CD4-positive, alpha-beta memory T cell (primary cell): ENCODE measurements at regions of chrX and their contacts with region 1.

Region 1: DNA sequence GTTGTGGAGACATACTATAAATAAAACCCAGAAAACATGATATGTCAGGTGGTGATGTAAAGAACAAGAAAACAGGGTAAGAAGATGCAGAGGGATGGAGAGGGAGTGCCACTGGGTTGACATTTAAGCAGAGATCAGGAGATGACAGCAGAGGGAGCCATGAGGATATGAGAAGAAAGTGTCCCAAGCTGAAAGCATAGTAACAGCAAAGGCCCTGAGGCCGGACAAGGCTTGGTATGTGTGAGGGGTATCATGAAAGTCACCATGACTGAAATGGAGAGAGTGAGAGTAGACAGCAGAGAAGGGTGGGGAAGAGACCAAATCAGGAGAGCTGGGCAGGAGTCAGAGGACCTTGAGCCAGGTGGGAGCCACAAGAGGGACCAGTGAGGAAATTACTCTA is 3.4 kb downstream of the GPKOW start:
- DNase-seq: no peak
- H3K4me3 ChIP-seq: no peak overlapping the region
- H3K4me3 Mint-ChIP-seq: peak overlapping the region in 2 of 8 donors; percentile 25 to 73
- H3K27ac ChIP-seq: no peak overlapping the region
- H3K27ac Mint-ChIP-seq: no peak overlapping the region
- H3K4me1 ChIP-seq: peaks cover 34% of the 10 kb centered on the region
- H3K4me1 Mint-ChIP-seq: peaks cover 23 to 50% (median 33%) of the 10 kb centered on the region in 4 donors
- H3K27me3 ChIP-seq: no peaks in the 10 kb centered on the region
- H3K27me3 Mint-ChIP-seq: no peaks in the 10 kb centered on the region

Region 2: DNA sequence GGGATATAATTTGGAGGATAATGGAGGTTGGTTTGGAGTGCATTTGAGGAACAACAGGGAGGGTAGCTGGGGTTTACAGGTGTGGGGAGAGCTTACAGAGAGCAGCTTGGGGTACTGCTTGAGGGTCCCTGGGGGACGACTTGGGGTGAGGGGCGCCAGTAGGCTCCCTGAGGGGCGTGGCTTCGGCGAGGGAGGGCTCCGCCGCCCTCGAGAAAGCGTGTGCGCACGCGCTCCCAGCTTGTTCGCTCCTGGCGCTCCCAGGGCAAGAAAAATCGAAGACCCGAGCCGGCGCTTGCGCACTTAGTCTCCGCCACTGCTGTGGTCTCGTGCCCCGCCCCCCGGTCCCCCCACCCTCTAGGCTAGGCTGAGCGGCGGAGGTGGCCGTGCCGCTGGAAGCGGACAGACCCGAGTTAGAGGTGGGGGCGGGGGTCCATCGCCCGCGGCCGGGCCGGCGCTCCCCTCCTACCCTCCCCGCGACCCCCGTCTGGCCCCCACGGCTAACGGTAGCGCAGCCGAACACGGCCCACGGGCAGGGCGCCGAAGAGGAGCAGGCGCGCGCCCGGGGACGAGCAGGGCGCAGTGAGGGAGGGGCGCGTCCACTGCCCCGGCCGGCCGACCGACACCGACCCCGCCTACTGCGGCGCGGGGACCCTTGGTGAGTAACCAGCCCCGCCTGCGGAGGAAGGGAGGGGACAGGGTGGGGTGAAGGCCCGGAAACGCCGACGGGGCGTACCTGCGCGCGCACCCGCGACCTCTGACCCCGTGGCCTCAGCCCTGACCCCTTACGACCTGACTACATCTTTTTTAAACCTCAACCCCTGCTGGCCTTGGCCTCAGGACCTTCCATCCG is 66.7 kb before region 1 on chrX:
- CTCF ChIA-PET with region 1: no interaction called
- POLR2A ChIA-PET with region 1: no interaction called
- intact Hi-C with region 1: loop called (anchors 2 kb)
- DNase-seq: peak; percentile 44 to 65 (median 49)
- H3K4me3 ChIP-seq: peak overlapping the region in 1 of 2 donors; percentile 43
- H3K4me3 Mint-ChIP-seq: peak overlapping the region; percentile 79 to 89 (median 86)
- H3K27ac ChIP-seq: peak overlapping the region; percentile 78
- H3K27ac Mint-ChIP-seq: peak overlapping the region; percentile 82 to 98 (median 94)
- H3K4me1 ChIP-seq: peaks cover 21% of the 10 kb centered on the region
- H3K4me1 Mint-ChIP-seq: peaks cover 18 to 32% (median 24%) of the 10 kb centered on the region in 4 donors
- H3K27me3 ChIP-seq: no peaks in the 10 kb centered on the region
- H3K27me3 Mint-ChIP-seq: no peaks in the 10 kb centered on the region

Region 3: GRCh38 chrX:49073601-49074571 is 46.2 kb before region 1 on chrX and contains the start of gene PRAF2:
- CTCF ChIA-PET with region 1: no interaction called
- POLR2A ChIA-PET with region 1: no interaction called
- intact Hi-C with region 1: loop called (anchors 1 kb)
- DNase-seq: peak; percentile 85 to 93 (median 89)
- H3K4me3 ChIP-seq: peak within 1 kb of the TSS; percentile 36 to 60
- H3K4me3 Mint-ChIP-seq: peak within 1 kb of the TSS; percentile 75 to 86 (median 84)
- H3K27ac ChIP-seq: peak within 1 kb of the TSS; percentile 77
- H3K27ac Mint-ChIP-seq: peak within 1 kb of the TSS; percentile 83 to 93 (median 88)
- H3K4me1 ChIP-seq: peaks cover 20% of the 10 kb centered on the region
- H3K4me1 Mint-ChIP-seq: peaks cover 5 to 28% (median 17%) of the 10 kb centered on the region in 4 donors
- H3K27me3 ChIP-seq: no peaks in the 10 kb centered on the region
- H3K27me3 Mint-ChIP-seq: no peaks in the 10 kb centered on the region
- total RNA-seq, gene PRAF2: 25.4 to 28.9 TPM

Region 4: GRCh38 chrX:49100704-49101628 is 19.1 kb before region 1 on chrX:
- CTCF ChIA-PET with region 1: no interaction called
- POLR2A ChIA-PET with region 1: no interaction called
- intact Hi-C with region 1: loop called (anchors 2 kb)
- DNase-seq: peak; percentile 88 to 91 (median 89)
- H3K4me3 ChIP-seq: peak overlapping the region; percentile 22 to 71
- H3K4me3 Mint-ChIP-seq: peak overlapping the region; percentile 87 to 92 (median 90)
- H3K27ac ChIP-seq: peak overlapping the region; percentile 76
- H3K27ac Mint-ChIP-seq: peak overlapping the region; percentile 93 to 97 (median 94)
- H3K4me1 ChIP-seq: peaks cover 6% of the 10 kb centered on the region
- H3K4me1 Mint-ChIP-seq: peaks cover 0 to 9% (median 4%) of the 10 kb centered on the region in 4 donors
- H3K27me3 ChIP-seq: no peaks in the 10 kb centered on the region
- H3K27me3 Mint-ChIP-seq: no peaks in the 10 kb centered on the region

Region 5: GRCh38 chrX:49155900-49156837 is 36.1 kb after region 1 on chrX:
- CTCF ChIA-PET with region 1: interaction called, 3 read pairs
- POLR2A ChIA-PET with region 1: interaction called, 6 read pairs
- intact Hi-C with region 1: loop called (anchors 1 kb)
- DNase-seq: peak; percentile 85 to 86 (median 85)
- H3K4me3 ChIP-seq: peak overlapping the region; percentile 29 to 56
- H3K4me3 Mint-ChIP-seq: peak overlapping the region; percentile 91 to 97 (median 93)
- H3K27ac ChIP-seq: peak overlapping the region; percentile 86
- H3K27ac Mint-ChIP-seq: peak overlapping the region; percentile 95 to 99 (median 97)
- H3K4me1 ChIP-seq: peaks cover 8% of the 10 kb centered on the region
- H3K4me1 Mint-ChIP-seq: peaks cover 9 to 23% (median 12%) of the 10 kb centered on the region in 4 donors
- H3K27me3 ChIP-seq: no peaks in the 10 kb centered on the region
- H3K27me3 Mint-ChIP-seq: no peaks in the 10 kb centered on the region

Region 6: GRCh38 chrX:49163555-49164419 is 43.7 kb after region 1 on chrX:
- CTCF ChIA-PET with region 1: interaction called, 3 read pairs
- POLR2A ChIA-PET with region 1: interaction called, 4 read pairs
- intact Hi-C with region 1: loop called (anchors 2 kb)
- DNase-seq: peak; percentile 81 to 84 (median 82)
- H3K4me3 ChIP-seq: peak overlapping the region in 1 of 2 donors; percentile 50
- H3K4me3 Mint-ChIP-seq: peak overlapping the region; percentile 70 to 88 (median 80)
- H3K27ac ChIP-seq: peak overlapping the region; percentile 58
- H3K27ac Mint-ChIP-seq: peak overlapping the region; percentile 83 to 95 (median 92)
- H3K4me1 ChIP-seq: peaks cover 41% of the 10 kb centered on the region
- H3K4me1 Mint-ChIP-seq: peaks cover 14 to 41% (median 29%) of the 10 kb centered on the region in 4 donors
- H3K27me3 ChIP-seq: no peaks in the 10 kb centered on the region
- H3K27me3 Mint-ChIP-seq: no peaks in the 10 kb centered on the region

Region 7: GRCh38 chrX:49269010-49269767 is 149.1 kb after region 1 on chrX:
- CTCF ChIA-PET with region 1: no interaction called
- POLR2A ChIA-PET with region 1: no interaction called
- intact Hi-C with region 1: no loop called
- DNase-seq: peak; percentile 92 to 98 (median 96)
- H3K4me3 ChIP-seq: peak overlapping the region; percentile 65 to 68
- H3K4me3 Mint-ChIP-seq: peak overlapping the region; percentile 89 to 99 (median 95)
- H3K27ac ChIP-seq: peak overlapping the region; percentile 95
- H3K27ac Mint-ChIP-seq: peak overlapping the region; percentile 99 to 100 (median 100)
- H3K4me1 ChIP-seq: peaks cover 47% of the 10 kb centered on the region
- H3K4me1 Mint-ChIP-seq: peaks cover 21 to 65% (median 47%) of the 10 kb centered on the region in 4 donors
- H3K27me3 ChIP-seq: no peaks in the 10 kb centered on the region
- H3K27me3 Mint-ChIP-seq: no peaks in the 10 kb centered on the region

Region 8: GRCh38 chrX:49754233-49754857 is 634.2 kb after region 1 on chrX:
- CTCF ChIA-PET with region 1: no interaction called
- POLR2A ChIA-PET with region 1: no interaction called
- intact Hi-C with region 1: loop called (anchors 1 kb)
- DNase-seq: peak in 4 of 5 donors; percentile 47 to 51 (median 49)
- H3K4me3 ChIP-seq: no peak overlapping the region
- H3K4me3 Mint-ChIP-seq: no peak overlapping the region
- H3K27ac ChIP-seq: no peak overlapping the region
- H3K27ac Mint-ChIP-seq: no peak overlapping the region
- H3K4me1 ChIP-seq: no peaks in the 10 kb centered on the region
- H3K4me1 Mint-ChIP-seq: peaks cover 0 to 2% (median 0%) of the 10 kb centered on the region in 4 donors
- H3K27me3 ChIP-seq: no peaks in the 10 kb centered on the region
- H3K27me3 Mint-ChIP-seq: peaks cover 0 to 3% of the 10 kb centered on the region in 2 donors